H1 (cell line): ENCODE measurements at regions of chr10 and their contacts with region 1.

Region 1: DNA sequence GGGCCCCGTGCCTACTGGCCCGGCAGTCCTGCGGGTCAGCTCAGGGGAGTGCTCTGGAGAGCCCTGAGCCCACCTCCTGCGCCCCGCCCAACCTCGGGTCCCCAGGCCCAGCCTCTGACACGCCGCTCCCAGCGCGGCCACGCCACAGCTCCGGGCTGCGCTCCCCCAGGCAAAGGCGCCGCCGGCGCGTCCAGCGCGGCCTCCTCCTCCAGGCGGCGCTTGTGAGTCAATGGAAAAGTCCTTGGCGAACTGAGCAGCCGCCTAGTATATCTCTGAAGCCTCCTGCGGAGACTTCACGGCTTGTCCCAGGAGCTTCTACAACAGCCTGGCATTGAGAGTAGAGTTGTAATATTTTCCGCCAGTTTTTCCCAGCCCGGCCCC is 29.5 kb upstream of the BMS1 start:
- DNase-seq: peak; percentile 47 to 96
- H3K4me3 ChIP-seq: peak overlapping the region; percentile 60 to 75 (median 62); a peak in 7 of 8 replicates
- H3K27ac ChIP-seq: no peak overlapping the region
- H3K4me1 ChIP-seq: peaks cover 0 to 14% (median 2%) of the 10 kb centered on the region in 4 experiments; a peak in 4 of 7 replicates
- H3K27me3 ChIP-seq: peaks cover 28 to 54% (median 49%) of the 10 kb centered on the region in 4 experiments
- CTCF ChIP-seq: peak; percentile 80 to 88 (median 84)
- EP300 ChIP-seq: no peak
- POLR2A ChIP-seq: no peak
- RAD21 ChIP-seq: peak; percentile 66 to 75

Region 2: GRCh38 chr10:42769653-42770052 is 16.5 kb after region 1 on chr10:
- CTCF ChIA-PET with region 1: interaction called, 10 read pairs
- POLR2A ChIA-PET with region 1: interaction called, 3 read pairs
- DNase-seq: no peak
- H3K4me3 ChIP-seq: no peak overlapping the region
- H3K27ac ChIP-seq: no peak overlapping the region
- H3K4me1 ChIP-seq: no peaks in the 10 kb centered on the region
- H3K27me3 ChIP-seq: no peaks in the 10 kb centered on the region; a peak in 2 of 7 replicates
- CTCF ChIP-seq: no peak
- EP300 ChIP-seq: no peak
- POLR2A ChIP-seq: no peak
- RAD21 ChIP-seq: no peak

Region 3: DNA sequence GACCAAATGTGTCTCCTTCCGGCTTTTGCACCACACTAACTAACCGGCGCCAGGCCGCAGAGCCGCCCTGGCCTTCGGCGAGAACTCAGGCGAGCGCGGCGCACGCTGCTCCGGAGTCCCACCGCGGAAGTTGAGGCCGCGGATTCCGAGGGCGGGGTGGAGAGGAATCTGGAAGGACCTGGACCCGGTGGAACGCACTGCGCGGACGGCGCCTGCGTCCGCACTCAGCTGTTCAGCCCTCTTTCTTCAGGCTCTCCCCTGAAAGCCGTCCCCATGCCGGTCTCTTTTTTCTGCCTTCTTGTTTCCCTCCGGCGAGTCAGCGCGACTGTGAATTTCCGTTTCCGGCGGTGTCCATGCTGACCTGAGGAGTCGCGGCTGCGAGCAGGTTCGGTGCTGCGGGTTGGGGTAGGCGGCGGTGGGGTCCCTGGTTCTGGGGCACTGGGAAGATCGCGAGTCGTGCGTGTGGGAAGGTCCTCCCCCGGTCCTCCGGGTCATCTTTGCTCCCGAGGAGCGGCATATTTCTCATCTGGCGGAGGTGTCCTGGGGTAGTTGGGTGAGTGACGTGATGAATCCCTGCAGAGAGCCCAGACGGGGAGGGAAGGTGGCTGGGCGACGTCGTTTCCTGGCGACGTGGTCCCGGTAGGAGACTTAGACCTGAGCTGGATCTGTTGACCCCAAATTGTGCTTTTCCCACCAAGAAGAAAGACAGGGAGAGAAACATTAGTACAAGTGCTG is 29.5 kb after region 1 on chr10 and contains the start of gene BMS1:
- CTCF ChIA-PET with region 1: interaction called, 11 read pairs
- POLR2A ChIA-PET with region 1: interaction called, 13 read pairs
- DNase-seq: peak; percentile 73 to 92
- H3K4me3 ChIP-seq: peak within 1 kb of the TSS; percentile 83 to 94 (median 91)
- H3K27ac ChIP-seq: peak within 1 kb of the TSS; percentile 95
- H3K4me1 ChIP-seq: no peaks in the 10 kb centered on the region; a peak in 1 of 7 replicates
- H3K27me3 ChIP-seq: peaks cover 0 to 5% (median 0%) of the 10 kb centered on the region in 4 experiments; a peak in 2 of 7 replicates
- CTCF ChIP-seq: no peak
- EP300 ChIP-seq: peak in 1 of 2 experiments; percentile 82; a peak in 1 of 3 replicates
- POLR2A ChIP-seq: peak; percentile 94 to 97
- RAD21 ChIP-seq: no peak
- total RNA-seq, gene BMS1: 34.6 and 35.0 TPM in 2 replicates